CD8-positive, alpha-beta T cell (primary cell): ENCODE measurements at regions of chr7 and their contacts with region 1.

Region 1: DNA sequence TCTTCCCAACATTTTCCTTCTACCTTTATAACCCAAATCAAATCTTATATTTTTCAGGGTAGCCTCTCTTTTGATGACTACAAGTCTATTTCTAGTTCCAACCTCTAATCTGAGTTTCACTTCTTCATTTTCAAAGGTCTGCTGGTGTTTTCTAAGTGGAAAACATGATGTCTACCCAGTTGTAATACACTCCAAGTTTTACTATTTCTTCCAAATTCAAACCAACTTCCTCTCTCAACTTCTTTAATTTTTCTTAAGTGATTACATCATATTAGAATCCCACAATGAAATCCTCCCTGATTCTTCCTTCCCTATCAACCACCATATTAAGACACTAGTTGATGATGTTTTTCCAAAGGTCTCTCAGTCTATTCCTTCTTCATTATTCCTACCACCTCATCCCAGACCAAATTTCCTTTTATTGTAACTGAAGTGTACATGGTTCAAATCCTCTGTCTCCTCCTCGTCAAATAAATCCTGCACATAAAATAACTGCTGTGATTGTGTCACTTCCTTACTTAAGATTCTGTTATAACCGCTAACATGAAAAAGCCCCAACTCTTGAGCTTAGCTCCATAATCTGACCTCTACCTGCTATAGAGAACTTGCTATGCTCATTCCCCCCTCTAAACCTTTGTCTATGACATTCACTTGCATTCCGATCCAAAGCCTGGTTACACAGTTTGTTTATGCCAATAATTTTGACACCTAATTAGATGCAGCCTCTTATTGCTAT is 12.7 kb downstream of the TAS2R38 start:
- DNase-seq: peak in 1 of 9 experiments; percentile 10
- ATAC-seq: no peak
- H3K4me3 ChIP-seq: no peak overlapping the region
- H3K4me3 Mint-ChIP-seq: no peak overlapping the region
- H3K27ac ChIP-seq: no peak overlapping the region
- H3K27ac Mint-ChIP-seq: no peak overlapping the region
- H3K4me1 ChIP-seq: no peaks in the 10 kb centered on the region
- H3K4me1 Mint-ChIP-seq: no peaks in the 10 kb centered on the region
- H3K27me3 ChIP-seq: no peaks in the 10 kb centered on the region
- H3K27me3 Mint-ChIP-seq: no peaks in the 10 kb centered on the region
- CTCF ChIP-seq: no peak

Region 2: GRCh38 chr7:141619745-141620144 is 341.1 kb before region 1 on chr7:
- CTCF ChIA-PET with region 1: no interaction called
- POLR2A ChIA-PET with region 1: no interaction called
- intact Hi-C with region 1: no loop called
- DNase-seq: no peak
- ATAC-seq: no peak
- H3K4me3 ChIP-seq: no peak overlapping the region
- H3K4me3 Mint-ChIP-seq: no peak overlapping the region
- H3K27ac ChIP-seq: no peak overlapping the region
- H3K27ac Mint-ChIP-seq: no peak overlapping the region
- H3K4me1 ChIP-seq: no peaks in the 10 kb centered on the region
- H3K4me1 Mint-ChIP-seq: no peaks in the 10 kb centered on the region
- H3K27me3 ChIP-seq: no peaks in the 10 kb centered on the region
- H3K27me3 Mint-ChIP-seq: no peaks in the 10 kb centered on the region
- CTCF ChIP-seq: no peak

Region 3: GRCh38 chr7:141975806-141976523 is 15.1 kb after region 1 on chr7:
- CTCF ChIA-PET with region 1: interaction called, 17 read pairs
- POLR2A ChIA-PET with region 1: no interaction called
- intact Hi-C with region 1: no loop called
- DNase-seq: peak; percentile 17 to 81 (median 64)
- ATAC-seq: peak; percentile 82
- H3K4me3 ChIP-seq: peak overlapping the region; percentile 46 to 50
- H3K4me3 Mint-ChIP-seq: peak overlapping the region; percentile 79
- H3K27ac ChIP-seq: peak overlapping the region in 1 of 2 experiments; percentile 18
- H3K27ac Mint-ChIP-seq: peak overlapping the region; percentile 46
- H3K4me1 ChIP-seq: peaks cover 6% of the 10 kb centered on the region
- H3K4me1 Mint-ChIP-seq: peaks cover 22% of the 10 kb centered on the region
- H3K27me3 ChIP-seq: no peaks in the 10 kb centered on the region
- H3K27me3 Mint-ChIP-seq: no peaks in the 10 kb centered on the region
- CTCF ChIP-seq: peak; percentile 76